Posterior vena cava (tissue), 2 donors: ENCODE measurements at regions of chr12 and their contacts with region 1.

Region 1: GRCh38 chr12:33370318-33370717 is 69.3 kb downstream of the SYT10 start:
- DNase-seq: no peak

Region 2: DNA sequence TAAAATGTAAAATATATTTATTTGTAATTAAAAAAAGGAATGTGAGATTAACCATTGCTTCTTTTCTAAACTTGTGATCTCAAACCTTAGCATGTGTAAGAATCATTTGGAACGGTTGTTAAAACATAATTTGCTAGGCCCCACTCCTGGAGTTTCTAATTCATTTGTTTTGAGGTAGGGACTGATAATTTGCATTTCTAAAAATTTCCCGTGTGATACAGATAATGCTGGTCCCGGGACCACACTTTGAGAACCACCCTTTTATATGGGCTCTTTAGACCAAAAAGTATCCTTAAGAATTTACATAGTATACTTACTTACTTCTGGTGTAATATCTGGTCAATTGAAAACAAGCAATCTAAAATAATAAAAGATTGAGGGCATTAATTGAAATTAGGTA is 80.2 kb after region 1 on chr12:
- intact Hi-C with region 1: loop called in 1 of 2 experiments (anchors 2 kb)
- DNase-seq: no peak

Region 3: DNA sequence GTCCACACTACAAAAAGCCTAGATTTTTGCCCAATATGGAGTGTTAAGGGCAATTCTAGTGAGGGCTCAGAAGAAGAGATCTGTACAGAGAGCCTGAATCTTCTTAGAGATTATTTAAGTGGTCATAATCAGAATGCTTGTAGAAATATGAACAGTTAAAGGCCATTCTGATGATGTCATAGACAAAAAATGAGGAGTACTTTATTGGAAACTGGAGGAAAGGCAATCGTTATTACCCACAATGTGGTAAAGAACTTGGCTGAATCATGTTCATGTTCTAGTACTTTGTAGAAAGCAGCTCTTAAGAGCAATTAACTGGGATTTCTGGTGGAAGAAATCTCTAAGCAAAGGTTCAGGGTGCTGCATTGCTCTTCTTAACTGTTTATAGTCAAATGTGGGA is 105.7 kb after region 1 on chr12:
- intact Hi-C with region 1: no loop called
- DNase-seq: no peak